ENCODE measurements at regions of chr12 and their contacts with region 1.

Region 1: DNA sequence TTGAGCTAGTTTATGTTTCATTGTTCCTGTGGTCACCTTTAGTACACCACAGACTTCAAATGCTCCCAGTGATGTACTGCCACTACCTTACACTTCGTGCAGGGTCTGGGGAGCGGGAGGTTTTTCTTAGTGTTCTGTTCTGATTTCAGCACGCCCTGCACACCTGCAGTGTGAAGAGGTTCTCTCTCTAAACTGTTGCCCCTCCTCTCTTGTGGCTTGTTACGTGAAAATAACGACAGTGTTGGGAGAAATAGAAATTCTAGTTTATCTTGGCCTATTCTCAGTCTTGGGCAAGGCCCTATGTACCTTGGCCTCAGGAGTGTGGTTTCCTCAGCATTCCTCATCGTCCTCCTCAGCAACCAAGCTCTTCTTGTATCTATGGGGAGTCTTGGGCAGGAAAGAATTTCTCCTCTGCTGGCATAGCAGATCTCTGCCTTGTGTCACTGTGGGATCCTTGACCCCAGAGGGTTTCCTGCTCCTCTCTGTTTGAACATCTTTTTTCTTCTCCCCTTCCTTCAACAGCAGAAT is 48.6 kb downstream of the EIF2S3B start:
- DNase-seq: peak; percentile 68
- ATAC-seq: peak; percentile 38
- H3K4me3 Mint-ChIP-seq: peak overlapping the region; percentile 86
- H3K27ac Mint-ChIP-seq: peak overlapping the region; percentile 99
- H3K4me1 Mint-ChIP-seq: peaks cover 51% of the 10 kb centered on the region
- H3K27me3 Mint-ChIP-seq: no peaks in the 10 kb centered on the region
- CTCF ChIP-seq: no peak

Region 2: DNA sequence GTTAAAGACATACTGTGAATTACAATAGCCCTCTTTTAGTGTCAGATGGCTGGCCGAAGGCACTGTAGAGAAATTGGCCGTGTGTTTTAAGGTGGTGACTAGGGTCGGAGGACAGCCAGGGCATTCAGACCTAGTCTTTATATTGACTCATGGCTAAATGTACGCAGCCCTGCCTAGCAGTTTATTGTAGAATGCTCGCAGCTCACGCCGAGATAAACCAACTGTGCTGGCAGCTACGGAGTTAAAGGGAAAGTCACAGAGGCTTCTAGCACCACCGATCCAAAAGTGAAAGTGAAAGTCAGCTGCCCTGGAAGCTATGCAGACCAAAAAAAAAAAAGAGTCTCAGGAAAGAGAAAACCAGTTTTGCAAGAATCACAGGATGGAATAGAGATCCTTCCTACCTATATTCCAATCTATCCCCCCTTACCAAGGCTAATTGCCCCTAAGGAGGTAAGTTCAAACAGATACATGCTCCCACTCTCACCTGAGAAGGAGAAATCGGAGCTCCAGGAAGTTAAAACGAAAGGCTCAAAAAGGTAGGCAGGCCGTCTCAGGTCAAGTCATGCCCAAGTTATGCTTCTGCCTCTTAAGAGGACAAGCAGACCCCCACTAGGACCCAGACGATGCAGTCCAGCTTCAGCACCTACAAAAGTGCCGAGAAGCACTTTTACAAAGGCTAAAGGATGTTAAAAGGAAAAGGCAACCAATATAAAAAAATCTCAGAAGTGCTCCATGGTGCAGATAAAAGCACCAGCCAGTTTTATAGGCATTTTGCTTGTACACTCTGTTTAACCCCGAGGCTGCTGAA is 189.3 kb before region 1 on chr12:
- CTCF ChIA-PET with region 1: interaction called, 18 read pairs
- POLR2A ChIA-PET with region 1: interaction called, 18 read pairs
- intact Hi-C with region 1: loop called (anchors 10 kb)
- DNase-seq: peak; percentile 83
- ATAC-seq: peak; percentile 62
- H3K4me3 Mint-ChIP-seq: no peak overlapping the region
- H3K27ac Mint-ChIP-seq: no peak overlapping the region
- H3K4me1 Mint-ChIP-seq: peaks cover 41% of the 10 kb centered on the region
- H3K27me3 Mint-ChIP-seq: no peaks in the 10 kb centered on the region
- CTCF ChIP-seq: no peak

Region 3: GRCh38 chr12:10395390-10395998 is 158.8 kb before region 1 on chr12:
- CTCF ChIA-PET with region 1: interaction called, 12 read pairs
- POLR2A ChIA-PET with region 1: interaction called, 35 read pairs
- intact Hi-C with region 1: loop called (anchors 5 kb)
- DNase-seq: no peak
- ATAC-seq: peak; percentile 45
- H3K4me3 Mint-ChIP-seq: peak overlapping the region; percentile 63
- H3K27ac Mint-ChIP-seq: peak overlapping the region; percentile 97
- H3K4me1 Mint-ChIP-seq: peaks cover 64% of the 10 kb centered on the region
- H3K27me3 Mint-ChIP-seq: no peaks in the 10 kb centered on the region
- CTCF ChIP-seq: no peak

Region 4: GRCh38 chr12:10540776-10541205 is 13.5 kb before region 1 on chr12:
- CTCF ChIA-PET with region 1: interaction called, 10 read pairs
- POLR2A ChIA-PET with region 1: interaction called, 18 read pairs
- intact Hi-C with region 1: no loop called
- DNase-seq: peak; percentile 38
- ATAC-seq: peak; percentile 92
- H3K4me3 Mint-ChIP-seq: peak overlapping the region; percentile 22
- H3K27ac Mint-ChIP-seq: peak overlapping the region; percentile 96
- H3K4me1 Mint-ChIP-seq: peaks cover 66% of the 10 kb centered on the region
- H3K27me3 Mint-ChIP-seq: no peaks in the 10 kb centered on the region
- CTCF ChIP-seq: no peak